ENCODE measurements at regions of chr6 and their contacts with region 1.

Region 1: DNA sequence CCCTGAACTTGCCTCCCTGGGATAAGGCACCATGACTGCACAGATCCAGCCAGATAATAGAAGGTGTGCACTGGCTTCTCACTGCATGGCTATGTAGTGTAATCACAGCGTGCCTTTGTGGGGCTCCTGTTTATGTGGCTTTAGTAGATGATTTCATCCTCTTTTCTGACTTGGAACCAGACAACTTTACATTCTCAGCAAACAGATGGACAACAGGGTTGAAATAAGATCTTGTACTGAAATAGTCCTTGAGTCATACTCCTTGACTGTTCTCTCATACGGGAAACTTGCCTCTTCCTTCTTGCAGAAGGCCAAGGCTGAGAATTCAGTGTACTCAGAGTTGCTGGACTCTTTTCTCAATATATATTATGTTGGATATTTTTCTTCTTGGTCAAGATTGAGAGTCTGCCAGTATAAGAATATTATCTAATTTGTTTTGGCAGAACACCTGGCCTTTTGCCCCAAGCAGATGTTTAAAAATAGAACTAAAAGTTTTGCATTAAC is 25.0 kb upstream of the RNF144B start:
- DNase-seq: no peak
- H3K4me3 ChIP-seq: no peak overlapping the region
- H3K27ac ChIP-seq: peak overlapping the region; percentile 35 to 61
- H3K4me1 ChIP-seq: peaks cover 0 to 12% of the 10 kb centered on the region in 2 donors
- H3K27me3 ChIP-seq: no peaks in the 10 kb centered on the region
- CTCF ChIP-seq: no peak

Region 2: DNA sequence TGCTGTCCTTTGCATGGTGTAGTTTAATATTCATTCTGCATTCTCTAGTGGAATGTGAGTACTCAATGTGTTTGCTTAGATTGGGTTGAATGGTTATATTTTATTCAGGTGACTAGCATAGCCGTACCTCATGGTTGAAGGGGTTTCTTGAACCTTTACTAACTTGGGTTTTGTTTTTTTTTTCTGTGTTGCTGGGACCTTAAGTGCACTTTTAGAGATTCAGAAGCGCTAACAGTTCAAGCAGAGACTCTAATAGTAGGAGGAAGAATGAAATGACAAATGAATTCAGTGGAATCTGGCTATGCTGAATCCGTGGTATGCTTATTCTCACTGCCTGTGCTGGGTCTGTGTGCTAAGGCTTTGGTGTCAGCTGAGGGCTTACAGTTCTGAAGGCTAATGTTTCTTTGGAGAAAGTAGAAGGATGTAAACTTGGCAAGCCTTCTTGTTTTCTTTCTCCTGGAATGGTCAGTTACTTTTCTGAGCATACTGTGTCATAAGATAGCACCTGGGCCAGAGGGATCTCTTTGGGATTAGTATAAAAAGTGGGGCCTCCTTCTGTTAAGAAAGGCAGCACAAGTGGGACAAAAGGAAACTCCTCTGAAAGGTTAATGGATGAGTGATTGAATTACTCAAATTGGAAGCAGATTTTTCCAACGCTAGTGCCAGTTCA is 53.7 kb after region 1 on chr6:
- intact Hi-C with region 1: loop called (anchors 5 kb)
- DNase-seq: no peak
- H3K4me3 ChIP-seq: peak overlapping the region in 1 of 2 donors; percentile 22
- H3K27ac ChIP-seq: peak overlapping the region; percentile 77 to 83
- H3K4me1 ChIP-seq: peaks cover 5 to 15% of the 10 kb centered on the region in 2 donors
- H3K27me3 ChIP-seq: no peaks in the 10 kb centered on the region
- CTCF ChIP-seq: no peak

Region 3: GRCh38 chr6:18477301-18477941 is 115.3 kb after region 1 on chr6:
- intact Hi-C with region 1: no loop called
- DNase-seq: no peak
- H3K4me3 ChIP-seq: no peak overlapping the region
- H3K27ac ChIP-seq: no peak overlapping the region
- H3K4me1 ChIP-seq: peaks cover 0 to 3% of the 10 kb centered on the region in 2 donors
- H3K27me3 ChIP-seq: no peaks in the 10 kb centered on the region
- CTCF ChIP-seq: no peak